Testis (tissue), 5 donors: ENCODE measurements at regions of chr6 and their contacts with region 1.

Region 1: DNA sequence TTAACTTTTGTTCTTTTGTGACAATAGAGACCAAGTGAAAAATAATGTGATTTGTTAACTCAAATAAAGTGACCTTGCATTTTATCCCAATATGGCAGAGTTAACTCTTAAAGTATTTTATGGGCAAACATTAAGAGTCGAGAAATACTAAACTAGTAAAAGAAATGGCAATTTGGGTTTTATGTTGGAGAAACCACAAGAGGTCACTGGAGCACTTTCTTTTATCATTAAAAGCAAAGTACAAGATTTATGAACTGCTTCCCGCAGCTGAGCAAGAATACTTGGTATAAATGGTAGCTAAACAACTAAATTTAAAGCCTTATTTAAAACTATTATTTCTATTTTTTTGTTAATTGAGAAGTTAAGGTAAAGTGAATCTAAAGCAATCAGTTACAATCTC is 33.5 kb upstream of the MCM9 start:
- DNase-seq: no peak
- H3K4me3 ChIP-seq: no peak overlapping the region
- H3K27ac ChIP-seq: no peak overlapping the region
- H3K4me1 ChIP-seq: no peaks in the 10 kb centered on the region
- H3K27me3 ChIP-seq: no peaks in the 10 kb centered on the region
- CTCF ChIP-seq: peak in 2 of 3 experiments; percentile 19 to 30
- POLR2A ChIP-seq: no peak

Region 2: DNA sequence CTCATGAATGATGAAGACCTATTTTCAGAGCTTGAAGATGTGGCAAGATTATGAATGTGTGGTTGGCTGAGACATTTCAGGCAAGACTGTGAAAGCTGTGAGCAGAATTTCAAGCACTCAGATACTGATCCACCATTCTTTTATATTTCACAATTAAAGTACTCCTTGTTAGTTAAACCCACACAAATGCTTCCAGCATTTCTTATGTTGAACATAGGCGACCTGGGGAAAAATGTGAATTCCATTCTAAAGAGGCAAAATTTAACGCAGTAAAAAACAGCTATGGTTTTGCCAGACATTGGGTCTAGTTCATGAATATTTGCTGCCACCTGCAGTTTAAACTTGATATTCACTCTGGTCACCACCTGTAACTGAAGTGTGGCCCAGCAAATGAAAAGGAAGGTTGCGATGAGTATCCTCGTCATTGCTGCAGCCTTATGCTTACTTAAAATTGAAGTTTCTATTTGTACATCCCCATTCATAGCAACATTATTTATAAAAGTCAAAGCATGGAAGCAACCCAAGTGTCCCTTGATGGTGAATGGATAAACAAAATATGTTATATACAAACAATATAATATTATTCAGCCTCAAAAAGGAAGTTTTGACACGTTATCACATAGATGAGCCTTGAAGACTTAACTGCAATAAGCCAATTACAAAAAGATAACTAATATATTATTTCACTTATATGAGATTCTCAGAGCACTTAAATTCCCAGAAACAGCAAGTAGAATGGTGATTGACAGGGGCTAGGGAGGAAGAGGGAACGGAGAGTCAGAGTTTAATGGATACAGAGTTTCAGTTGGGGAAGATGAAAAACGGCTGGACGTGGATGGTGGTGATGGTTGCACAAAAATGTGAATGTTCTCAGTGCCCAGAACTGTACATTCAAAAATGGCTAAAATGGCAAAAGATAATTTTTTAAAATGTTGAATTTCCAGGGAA is 142.5 kb after region 1 on chr6:
- intact Hi-C with region 1: loop called (anchors 5 kb)
- DNase-seq: peak; percentile 53
- H3K4me3 ChIP-seq: no peak overlapping the region
- H3K27ac ChIP-seq: no peak overlapping the region
- H3K4me1 ChIP-seq: peaks cover 8% of the 10 kb centered on the region
- H3K27me3 ChIP-seq: no peaks in the 10 kb centered on the region
- CTCF ChIP-seq: peak; percentile 59 to 65 (median 60)
- POLR2A ChIP-seq: no peak